ENCODE measurements at regions of chr1 and their contacts with region 1.

Region 1: DNA sequence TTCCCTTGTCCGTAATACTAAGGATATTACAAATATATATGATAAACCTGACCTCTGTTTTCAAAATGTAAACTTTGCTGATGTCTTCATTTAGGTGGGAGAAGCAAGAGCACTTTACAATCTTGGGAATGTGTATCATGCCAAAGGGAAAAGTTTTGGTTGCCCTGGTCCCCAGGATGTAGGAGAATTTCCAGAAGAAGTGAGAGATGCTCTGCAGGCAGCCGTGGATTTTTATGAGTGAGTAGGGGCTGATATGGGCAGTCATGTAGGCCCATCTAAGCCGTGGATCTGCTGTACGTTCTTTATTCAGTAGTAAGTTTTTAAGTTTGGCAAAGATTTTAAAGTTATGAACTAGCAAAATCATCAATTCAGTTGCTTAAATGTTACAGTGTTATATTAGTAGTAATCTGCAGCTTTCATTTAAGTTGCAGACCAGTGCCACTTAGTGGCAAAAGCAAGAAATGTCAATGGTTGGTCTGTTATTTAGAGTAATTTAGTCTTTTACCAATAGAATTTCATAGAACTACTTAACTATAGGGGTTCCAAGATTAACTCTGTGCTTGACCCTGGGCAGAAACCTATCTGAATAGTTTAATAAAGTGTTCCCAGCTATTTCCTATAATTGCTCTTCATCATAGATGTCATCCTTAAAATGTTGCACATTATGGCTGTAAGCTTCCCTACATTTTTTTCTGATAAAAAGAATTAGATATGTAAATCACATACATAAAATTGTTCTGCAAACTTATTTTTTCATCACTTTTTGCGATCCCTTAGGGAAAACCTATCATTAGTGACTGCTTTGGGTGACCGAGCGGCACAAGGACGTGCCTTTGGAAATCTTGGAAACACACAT is 21.3 kb downstream of the GPSM2 start:
- DNase-seq: no peak
- H3K4me3 ChIP-seq: no peak overlapping the region
- H3K27ac ChIP-seq: no peak overlapping the region
- H3K4me1 ChIP-seq: no peaks in the 10 kb centered on the region
- H3K27me3 ChIP-seq: no peaks in the 10 kb centered on the region
- CTCF ChIP-seq: peak; percentile 68 to 82

Region 2: GRCh38 chr1:108828022-108828961 is 69.8 kb before region 1 on chr1:
- intact Hi-C with region 1: loop called (anchors 2 kb)
- DNase-seq: peak; percentile 80 to 91
- H3K4me3 ChIP-seq: peak overlapping the region in 1 of 2 donors; percentile 27
- H3K27ac ChIP-seq: peak overlapping the region; percentile 60 to 78
- H3K4me1 ChIP-seq: peaks cover 0 to 40% (median 20%) of the 10 kb centered on the region in 4 donors
- H3K27me3 ChIP-seq: no peaks in the 10 kb centered on the region
- CTCF ChIP-seq: peak; percentile 68 to 88

Measured in tibial artery (tissue), 4 donors.